ENCODE measurements at regions of chr6 and their contacts with region 1.

Region 1: DNA sequence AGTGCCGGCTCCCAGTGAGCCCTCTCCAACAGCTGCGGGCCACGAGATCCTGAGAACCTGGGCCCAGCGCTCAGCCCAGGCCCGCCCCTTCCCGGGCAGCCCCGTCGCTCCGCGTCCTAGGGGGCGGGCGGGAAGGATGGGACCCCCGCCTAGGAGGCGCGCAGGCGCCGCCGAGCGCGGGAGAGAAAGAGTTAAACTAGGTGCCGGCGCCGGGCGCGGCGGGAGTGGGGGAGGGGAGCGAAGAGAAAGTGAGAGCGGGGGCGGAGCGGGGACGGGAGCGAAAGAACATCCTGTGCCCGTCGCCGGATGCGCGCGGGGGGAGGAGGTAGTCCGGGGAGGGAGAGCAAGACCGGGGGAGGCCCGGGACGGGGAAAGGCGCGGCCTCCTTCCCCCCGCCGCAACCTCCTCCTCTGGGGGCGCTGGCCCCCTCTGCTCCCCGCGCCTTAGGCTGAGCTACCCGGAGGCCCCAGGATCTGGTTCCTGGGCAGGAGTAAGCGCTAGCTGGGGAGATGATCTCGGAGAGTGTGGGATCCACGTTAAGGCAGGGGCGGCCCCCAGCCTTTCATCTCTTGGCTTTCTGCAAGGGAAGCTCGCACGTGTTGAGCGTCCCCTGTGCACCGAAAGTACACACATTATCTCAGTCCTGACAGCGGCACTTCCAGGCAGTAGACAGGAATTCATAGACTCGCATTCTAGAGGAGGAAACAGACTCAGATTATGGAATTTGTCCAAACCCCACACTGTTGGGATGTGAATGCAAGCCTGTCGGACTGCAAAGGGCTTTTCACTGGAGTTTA is 4.9 kb upstream of the ARMC12 start:
- DNase-seq: peak in 1 of 2 experiments; percentile 95
- H3K4me3 ChIP-seq: peak overlapping the region; percentile 43 to 91 (median 70)
- H3K27ac ChIP-seq: peak overlapping the region; percentile 92
- H3K4me1 ChIP-seq: peaks cover 13 to 32% (median 25%) of the 10 kb centered on the region in 4 experiments
- H3K27me3 ChIP-seq: peaks cover 0 to 2% (median under 1%) of the 10 kb centered on the region in 4 experiments; a peak in 3 of 7 replicates
- CTCF ChIP-seq: no peak
- EP300 ChIP-seq: peak in 1 of 2 experiments; percentile 89; a peak in 2 of 3 replicates
- POLR2A ChIP-seq: no peak
- RAD21 ChIP-seq: peak in 1 of 2 experiments; percentile 6; a peak in 1 of 4 replicates

Region 2: GRCh38 chr6:35327349-35328027 is 404.4 kb before region 1 on chr6:
- CTCF ChIA-PET with region 1: no interaction called
- POLR2A ChIA-PET with region 1: no interaction called
- DNase-seq: peak in 1 of 2 experiments; percentile 79
- H3K4me3 ChIP-seq: no peak overlapping the region
- H3K27ac ChIP-seq: no peak overlapping the region
- H3K4me1 ChIP-seq: 0 out of 7 replicates have a peak, but pooled peaks cover 0 to under 1% (median 0%) of the 10 kb centered on the region in 4 experiments
- H3K27me3 ChIP-seq: no peaks in the 10 kb centered on the region
- CTCF ChIP-seq: peak; percentile 51 to 84 (median 74)
- EP300 ChIP-seq: no peak
- POLR2A ChIP-seq: no peak
- RAD21 ChIP-seq: peak; percentile 62 to 76

Region 3: DNA sequence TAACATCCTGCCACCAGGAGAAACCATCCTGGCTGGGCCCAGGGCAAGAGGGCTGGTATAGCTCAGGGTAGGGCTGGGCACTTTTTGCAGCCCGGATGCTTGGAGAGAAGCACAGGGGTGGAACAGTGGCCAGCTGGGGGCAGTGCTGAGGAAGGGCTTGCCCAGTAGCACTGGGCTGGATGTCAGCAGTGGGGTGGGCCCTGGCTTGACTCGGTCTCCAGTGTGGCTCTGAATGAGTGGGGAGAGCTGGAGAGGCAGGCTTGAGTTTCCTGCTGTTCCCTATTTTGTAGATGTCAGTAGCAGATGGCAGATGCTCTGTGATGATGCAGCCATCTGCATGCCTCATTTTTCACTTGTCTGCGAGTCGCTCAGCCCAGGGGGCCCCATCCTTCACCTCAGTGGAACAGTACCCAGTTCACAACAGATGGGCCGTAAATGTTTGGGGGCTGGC is 162.9 kb before region 1 on chr6:
- CTCF ChIA-PET with region 1: interaction called, 38 read pairs
- POLR2A ChIA-PET with region 1: interaction called, 4 read pairs
- DNase-seq: peak in 1 of 2 experiments; percentile 83
- H3K4me3 ChIP-seq: no peak overlapping the region
- H3K27ac ChIP-seq: no peak overlapping the region
- H3K4me1 ChIP-seq: peaks cover 0 to 4% (median 2%) of the 10 kb centered on the region in 4 experiments; a peak in 3 of 7 replicates
- H3K27me3 ChIP-seq: no peaks in the 10 kb centered on the region
- CTCF ChIP-seq: peak; percentile 71 to 91 (median 87)
- EP300 ChIP-seq: no peak
- POLR2A ChIP-seq: no peak
- RAD21 ChIP-seq: peak; percentile 49 to 64

Region 4: GRCh38 chr6:35590622-35591066 is 141.3 kb before region 1 on chr6:
- CTCF ChIA-PET with region 1: interaction called, 84 read pairs
- POLR2A ChIA-PET with region 1: no interaction called
- DNase-seq: no peak
- H3K4me3 ChIP-seq: no peak overlapping the region
- H3K27ac ChIP-seq: no peak overlapping the region
- H3K4me1 ChIP-seq: no peaks in the 10 kb centered on the region
- H3K27me3 ChIP-seq: no peaks in the 10 kb centered on the region
- CTCF ChIP-seq: no peak
- EP300 ChIP-seq: no peak
- POLR2A ChIP-seq: no peak
- RAD21 ChIP-seq: no peak

Region 5: DNA sequence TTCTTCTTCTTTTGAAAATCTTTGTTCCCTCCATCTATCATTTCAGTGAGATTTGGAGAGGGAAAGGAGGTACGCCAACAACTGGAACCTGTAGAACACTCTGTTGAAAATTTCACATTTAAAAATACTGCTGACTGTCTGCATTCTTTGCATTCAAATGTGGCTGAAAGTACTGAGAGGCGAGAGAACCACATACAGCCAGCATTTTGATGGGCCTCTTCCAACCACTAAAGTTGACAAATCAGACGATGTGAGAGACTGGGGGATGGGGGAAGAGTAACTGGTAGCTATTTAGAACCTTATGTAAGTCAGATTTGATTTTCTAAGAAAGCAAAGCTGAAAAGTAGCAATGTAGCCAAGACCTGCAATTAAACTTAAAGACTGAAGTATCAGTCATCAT is 120.7 kb before region 1 on chr6:
- CTCF ChIA-PET with region 1: no interaction called
- POLR2A ChIA-PET with region 1: no interaction called
- DNase-seq: no peak
- H3K4me3 ChIP-seq: no peak overlapping the region
- H3K27ac ChIP-seq: no peak overlapping the region
- H3K4me1 ChIP-seq: no peaks in the 10 kb centered on the region; a peak in 1 of 7 replicates
- H3K27me3 ChIP-seq: no peaks in the 10 kb centered on the region
- CTCF ChIP-seq: no peak
- EP300 ChIP-seq: no peak
- POLR2A ChIP-seq: no peak
- RAD21 ChIP-seq: no peak

Region 6: GRCh38 chr6:35640017-35640664 is 91.8 kb before region 1 on chr6:
- CTCF ChIA-PET with region 1: interaction called, 11 read pairs
- POLR2A ChIA-PET with region 1: interaction called, 6 read pairs
- DNase-seq: no peak
- H3K4me3 ChIP-seq: no peak overlapping the region
- H3K27ac ChIP-seq: no peak overlapping the region
- H3K4me1 ChIP-seq: peaks cover 0 to 3% (median 0%) of the 10 kb centered on the region in 4 experiments; a peak in 2 of 7 replicates
- H3K27me3 ChIP-seq: no peaks in the 10 kb centered on the region
- CTCF ChIP-seq: no peak
- EP300 ChIP-seq: no peak
- POLR2A ChIP-seq: no peak
- RAD21 ChIP-seq: no peak

Region 7: GRCh38 chr6:35654883-35655282 is 77.1 kb before region 1 on chr6:
- CTCF ChIA-PET with region 1: no interaction called
- POLR2A ChIA-PET with region 1: no interaction called
- DNase-seq: no peak
- H3K4me3 ChIP-seq: no peak overlapping the region
- H3K27ac ChIP-seq: no peak overlapping the region
- H3K4me1 ChIP-seq: no peaks in the 10 kb centered on the region
- H3K27me3 ChIP-seq: no peaks in the 10 kb centered on the region
- CTCF ChIP-seq: no peak
- EP300 ChIP-seq: no peak
- POLR2A ChIP-seq: no peak
- RAD21 ChIP-seq: no peak

Region 8: GRCh38 chr6:35681298-35681697 is 50.6 kb before region 1 on chr6:
- CTCF ChIA-PET with region 1: interaction called, 15 read pairs
- POLR2A ChIA-PET with region 1: interaction called, 9 read pairs
- DNase-seq: no peak
- H3K4me3 ChIP-seq: no peak overlapping the region
- H3K27ac ChIP-seq: no peak overlapping the region
- H3K4me1 ChIP-seq: peaks cover 0 to 3% (median 0%) of the 10 kb centered on the region in 4 experiments; a peak in 1 of 7 replicates
- H3K27me3 ChIP-seq: no peaks in the 10 kb centered on the region
- CTCF ChIP-seq: no peak
- EP300 ChIP-seq: no peak
- POLR2A ChIP-seq: no peak
- RAD21 ChIP-seq: no peak

Region 9: GRCh38 chr6:35750557-35750956 is 18.6 kb after region 1 on chr6:
- CTCF ChIA-PET with region 1: interaction called, 137 read pairs
- POLR2A ChIA-PET with region 1: interaction called, 5 read pairs
- DNase-seq: no peak
- H3K4me3 ChIP-seq: no peak overlapping the region
- H3K27ac ChIP-seq: no peak overlapping the region
- H3K4me1 ChIP-seq: peaks cover 3 to 14% (median 9%) of the 10 kb centered on the region in 4 experiments
- H3K27me3 ChIP-seq: no peaks in the 10 kb centered on the region
- CTCF ChIP-seq: no peak
- EP300 ChIP-seq: no peak
- POLR2A ChIP-seq: no peak
- RAD21 ChIP-seq: no peak

Region 10: GRCh38 chr6:35765739-35766138 is 33.8 kb after region 1 on chr6:
- CTCF ChIA-PET with region 1: interaction called, 137 read pairs
- POLR2A ChIA-PET with region 1: interaction called, 84 read pairs
- DNase-seq: no peak
- H3K4me3 ChIP-seq: no peak overlapping the region
- H3K27ac ChIP-seq: no peak overlapping the region
- H3K4me1 ChIP-seq: peaks cover 0 to 7% (median 4%) of the 10 kb centered on the region in 4 experiments; a peak in 6 of 7 replicates
- H3K27me3 ChIP-seq: no peaks in the 10 kb centered on the region
- CTCF ChIP-seq: no peak
- EP300 ChIP-seq: no peak
- POLR2A ChIP-seq: no peak
- RAD21 ChIP-seq: no peak

Measured in H1 (cell line).